A673 (cell line): ENCODE measurements at regions of chr12 and their contacts with region 1.

Region 1: GRCh38 chr12:21438643-21439042 is 1.2 kb downstream of the PYROXD1 start:
- DNase-seq: no peak
- H3K4me3 ChIP-seq: peak overlapping the region; percentile 91
- H3K27ac ChIP-seq: peak overlapping the region; percentile 96
- H3K4me1 ChIP-seq: peaks cover 9% of the 10 kb centered on the region
- H3K27me3 ChIP-seq: no peaks in the 10 kb centered on the region
- CTCF ChIP-seq: no peak

Region 2: GRCh38 chr12:21117995-21118394 is 320.6 kb before region 1 on chr12:
- CTCF ChIA-PET with region 1: no interaction called
- POLR2A ChIA-PET with region 1: no interaction called
- intact Hi-C with region 1: no loop called
- DNase-seq: no peak
- H3K4me3 ChIP-seq: no peak overlapping the region
- H3K27ac ChIP-seq: no peak overlapping the region
- H3K4me1 ChIP-seq: no peaks in the 10 kb centered on the region
- H3K27me3 ChIP-seq: no peaks in the 10 kb centered on the region
- CTCF ChIP-seq: no peak

Region 3: DNA sequence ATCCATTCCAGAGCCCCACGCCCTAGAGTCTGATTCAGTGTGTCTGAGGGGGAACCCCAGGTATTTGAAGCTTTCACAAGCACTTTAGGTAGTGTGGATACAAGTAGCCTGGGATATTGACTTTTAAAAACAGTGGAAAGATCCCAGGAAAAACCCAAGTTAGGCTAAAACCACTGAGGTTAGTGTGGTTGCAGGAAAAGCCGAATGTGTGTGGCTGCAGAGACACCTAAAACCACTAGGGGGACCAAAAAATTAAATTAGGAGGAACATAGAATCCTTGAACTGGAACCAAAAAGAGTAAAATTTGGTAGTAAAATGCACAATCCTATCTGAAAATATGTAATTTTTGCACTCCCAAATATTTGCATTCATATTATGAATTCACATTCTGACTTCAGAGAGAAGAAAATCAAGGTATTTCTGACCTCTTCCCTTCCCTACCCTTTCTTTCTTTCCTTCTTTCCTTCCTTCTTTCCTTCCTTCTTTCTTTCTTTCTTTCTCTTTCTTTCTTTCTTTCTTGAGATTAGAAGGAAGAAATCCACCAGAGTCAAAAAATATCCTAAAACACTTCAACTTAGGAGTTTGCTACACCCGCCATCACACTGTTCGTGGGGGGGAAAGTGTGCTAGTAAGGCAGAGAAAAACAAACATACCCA is 141.8 kb before region 1 on chr12:
- CTCF ChIA-PET with region 1: interaction called, 14 read pairs
- POLR2A ChIA-PET with region 1: no interaction called
- intact Hi-C with region 1: no loop called
- DNase-seq: peak; percentile 15
- H3K4me3 ChIP-seq: no peak overlapping the region
- H3K27ac ChIP-seq: no peak overlapping the region
- H3K4me1 ChIP-seq: no peaks in the 10 kb centered on the region
- H3K27me3 ChIP-seq: peaks cover 7% of the 10 kb centered on the region
- CTCF ChIP-seq: peak; percentile 75

Region 4: GRCh38 chr12:21384261-21384660 is 54.4 kb before region 1 on chr12:
- CTCF ChIA-PET with region 1: no interaction called
- POLR2A ChIA-PET with region 1: no interaction called
- intact Hi-C with region 1: loop called (anchors 10 kb)
- DNase-seq: no peak
- H3K4me3 ChIP-seq: no peak overlapping the region
- H3K27ac ChIP-seq: no peak overlapping the region
- H3K4me1 ChIP-seq: no peaks in the 10 kb centered on the region
- H3K27me3 ChIP-seq: peaks cover 4% of the 10 kb centered on the region
- CTCF ChIP-seq: no peak

Region 5: DNA sequence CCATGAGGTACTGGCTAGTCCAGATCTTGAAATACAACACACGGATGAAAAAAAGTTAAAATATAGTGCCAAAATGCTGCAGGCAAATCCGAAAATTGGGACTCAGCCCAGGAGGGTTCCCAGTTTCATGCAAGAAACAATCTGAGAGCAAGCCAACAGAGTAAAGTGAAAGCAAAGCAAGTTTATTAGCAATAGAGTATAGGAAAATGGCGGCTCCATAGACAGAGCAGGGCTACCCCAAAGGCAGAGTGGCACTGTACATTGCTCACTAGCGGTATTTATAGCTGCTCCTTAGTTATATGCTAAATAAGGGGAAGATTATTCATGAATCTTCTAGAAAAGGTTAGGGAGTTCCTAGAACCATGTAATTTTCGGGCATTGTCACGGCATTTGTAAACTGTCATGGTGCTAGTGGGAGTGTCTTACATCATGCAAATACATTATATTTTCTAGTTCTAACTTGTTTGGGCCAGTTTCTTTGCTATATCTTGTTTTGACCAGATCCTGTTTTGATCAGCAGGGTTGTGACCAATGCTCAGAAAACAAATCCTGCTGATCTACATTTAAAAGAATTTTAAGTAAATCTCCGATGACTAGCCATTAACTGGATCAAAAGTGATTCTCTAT is 33.7 kb after region 1 on chr12:
- CTCF ChIA-PET with region 1: no interaction called
- POLR2A ChIA-PET with region 1: no interaction called
- intact Hi-C with region 1: no loop called
- DNase-seq: no peak
- H3K4me3 ChIP-seq: no peak overlapping the region
- H3K27ac ChIP-seq: no peak overlapping the region
- H3K4me1 ChIP-seq: no peaks in the 10 kb centered on the region
- H3K27me3 ChIP-seq: no peaks in the 10 kb centered on the region
- CTCF ChIP-seq: no peak

Region 6: DNA sequence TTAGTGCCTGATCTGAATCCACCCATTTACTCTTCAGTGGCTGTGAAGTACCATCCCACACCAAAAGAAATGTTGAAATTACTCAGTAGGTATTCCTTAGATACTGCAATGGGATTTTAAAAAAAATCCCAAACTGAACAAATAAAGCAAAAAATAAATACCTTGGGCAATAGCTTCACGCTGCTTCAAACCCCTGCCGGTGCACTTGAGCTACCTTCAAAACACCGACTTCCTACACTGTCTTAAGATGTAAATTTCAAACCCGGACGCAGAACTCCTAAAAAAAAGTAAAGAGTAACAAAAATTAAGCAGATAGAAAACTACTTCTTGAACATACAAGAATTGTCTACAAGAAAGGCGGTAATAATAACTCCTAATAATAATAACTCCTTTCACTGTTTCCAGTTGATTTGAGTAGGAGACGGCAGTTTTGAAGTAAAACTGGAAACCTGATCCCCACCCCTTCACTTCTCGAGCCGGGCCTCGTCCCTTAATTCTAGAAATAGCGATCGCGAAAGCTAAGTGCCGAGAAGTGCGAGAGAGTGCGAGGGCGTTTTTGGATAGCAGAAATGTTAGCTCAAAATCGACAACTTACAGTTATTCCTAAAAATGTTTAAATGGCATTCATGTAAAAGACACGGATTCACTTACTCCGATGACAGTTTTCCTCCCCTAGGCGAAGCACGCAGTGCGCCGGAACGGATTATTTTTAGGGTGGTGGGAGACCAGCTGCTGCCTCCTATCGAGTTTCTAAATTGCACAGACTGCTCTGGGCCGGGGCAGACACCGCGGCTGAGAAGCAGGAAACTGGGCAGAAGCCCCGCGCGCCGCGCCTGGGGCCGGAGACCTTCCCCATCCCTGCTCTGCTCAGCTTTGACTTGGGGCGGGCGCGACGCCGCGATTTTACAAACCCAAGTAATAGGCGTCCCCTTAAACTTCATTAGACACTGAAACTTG is 502.2 kb after region 1 on chr12 and contains the start of gene ABCC9:
- CTCF ChIA-PET with region 1: no interaction called
- POLR2A ChIA-PET with region 1: no interaction called
- intact Hi-C with region 1: no loop called
- DNase-seq: peak; percentile 15
- H3K4me3 ChIP-seq: no peak within 1 kb of the TSS
- H3K27ac ChIP-seq: no peak within 1 kb of the TSS
- H3K4me1 ChIP-seq: peaks cover 4% of the 10 kb centered on the region
- H3K27me3 ChIP-seq: peaks cover 71% of the 10 kb centered on the region
- CTCF ChIP-seq: no peak
- total RNA-seq, gene ABCC9: 0.04 TPM in 1 of 2 replicates, not detected in the other